Left ventricle myocardium superior (tissue), 1 donor: ENCODE measurements at regions of chr6 and their contacts with region 1.

Region 1: GRCh38 chr6:79570129-79571029 is 33.1 kb upstream of the LCA5 start:
- DNase-seq: no peak
- ATAC-seq: peak; percentile 63

Region 2: DNA sequence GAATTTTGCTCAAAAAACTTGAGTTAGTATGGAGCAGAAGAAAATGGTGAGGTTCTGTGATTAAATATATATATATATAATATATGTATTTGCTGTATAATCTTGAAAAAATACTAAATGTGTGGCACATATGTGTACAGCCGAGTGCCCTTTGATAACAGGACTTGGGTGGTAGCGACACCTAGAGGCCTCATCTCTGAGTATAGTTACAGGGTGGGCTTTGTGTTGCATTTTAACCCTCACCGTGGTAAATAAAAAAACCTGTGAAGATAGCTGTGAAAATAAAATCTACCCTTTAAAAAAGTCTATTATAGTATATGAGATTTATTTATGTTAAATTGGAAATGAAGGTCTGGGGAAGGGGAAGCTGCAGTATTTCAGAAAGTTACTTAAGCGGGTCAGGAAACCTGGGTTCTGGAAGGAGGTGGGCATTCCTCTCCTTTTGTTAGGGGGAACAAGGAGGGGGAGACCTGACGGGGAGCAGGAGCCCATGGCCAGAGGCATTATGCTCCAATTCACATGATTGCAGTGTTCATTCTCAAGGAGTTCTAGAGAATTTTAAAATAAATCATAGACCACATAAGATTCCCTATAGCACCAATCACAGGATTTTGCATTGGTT is 143.4 kb after region 1 on chr6:
- intact Hi-C with region 1: loop called (anchors 5 kb)
- DNase-seq: no peak
- ATAC-seq: peak; percentile 67